ENCODE measurements at regions of chr10 and their contacts with region 1.

Region 1: GRCh38 chr10:6678211-6678803 is 98.2 kb upstream of the PRKCQ start:
- DNase-seq: peak; percentile 47
- ATAC-seq: peak; percentile 84
- H3K4me3 ChIP-seq: no peak overlapping the region
- H3K27ac ChIP-seq: no peak overlapping the region
- H3K4me1 ChIP-seq: no peaks in the 10 kb centered on the region
- H3K27me3 ChIP-seq: peaks cover 60% of the 10 kb centered on the region
- CTCF ChIP-seq: peak; percentile 59 to 84 (median 72); a peak in 5 of 6 replicates
- POLR2A ChIP-seq: no peak
- RAD21 ChIP-seq: peak; percentile 73

Region 2: GRCh38 chr10:6416892-6417512 is 261.3 kb before region 1 on chr10:
- CTCF ChIA-PET with region 1: interaction called, 3 read pairs
- POLR2A ChIA-PET with region 1: no interaction called
- RAD21 ChIA-PET with region 1: no interaction called
- intact Hi-C with region 1: loop called (anchors 1 kb)
- DNase-seq: peak; percentile 35
- ATAC-seq: peak; percentile 86
- H3K4me3 ChIP-seq: no peak overlapping the region
- H3K27ac ChIP-seq: no peak overlapping the region
- H3K4me1 ChIP-seq: no peaks in the 10 kb centered on the region
- H3K27me3 ChIP-seq: peaks cover 33% of the 10 kb centered on the region
- CTCF ChIP-seq: peak; percentile 56 to 76 (median 67); a peak in 5 of 6 replicates
- POLR2A ChIP-seq: no peak
- RAD21 ChIP-seq: peak; percentile 77

Measured in HCT116 (cell line).